CD8-positive, alpha-beta memory T cell (primary cell): ENCODE measurements at regions of chr11 and their contacts with region 1.

Region 1: GRCh38 chr11:75450826-75451821 is 18.1 kb upstream of the KLHL35 start:
- DNase-seq: peak in 1 of 5 donors; percentile 54
- H3K4me3 ChIP-seq: no peak overlapping the region
- H3K4me3 Mint-ChIP-seq: no peak overlapping the region
- H3K27ac ChIP-seq: no peak overlapping the region
- H3K27ac Mint-ChIP-seq: no peak overlapping the region
- H3K4me1 ChIP-seq: no peaks in the 10 kb centered on the region
- H3K4me1 Mint-ChIP-seq: no peaks in the 10 kb centered on the region
- H3K27me3 ChIP-seq: no peaks in the 10 kb centered on the region
- H3K27me3 Mint-ChIP-seq: peaks cover 0 to 2% of the 10 kb centered on the region in 2 donors

Region 2: DNA sequence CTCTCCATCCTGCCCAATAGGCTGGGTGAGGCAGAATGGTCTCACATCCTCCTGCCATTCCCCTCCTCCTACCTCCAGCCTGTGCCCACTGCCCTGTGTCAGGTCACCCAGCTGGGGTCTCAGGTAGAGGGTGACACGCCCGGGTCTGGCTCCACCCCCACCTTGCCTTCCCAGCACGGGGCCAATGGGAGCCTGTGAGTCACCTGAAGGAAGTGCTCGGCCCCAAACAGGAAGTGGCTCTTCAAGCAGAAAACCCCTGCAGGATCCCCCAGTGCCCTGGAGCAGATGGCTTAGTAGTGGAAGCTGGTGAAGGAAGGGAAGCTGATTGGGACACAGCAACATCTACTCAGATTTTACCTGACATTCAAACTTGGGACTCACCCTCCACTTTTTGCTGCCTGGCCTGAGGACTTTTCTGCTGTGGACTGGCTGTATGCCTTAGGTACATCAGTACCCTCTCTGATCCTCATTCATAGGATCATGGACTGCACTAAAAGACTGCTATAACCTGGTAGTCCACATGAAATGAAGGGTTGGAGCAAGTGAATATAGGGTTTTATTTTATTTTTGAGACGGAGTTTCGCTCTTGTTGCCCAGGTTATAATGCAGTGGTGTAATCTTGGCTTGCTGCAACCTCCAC is 41.2 kb after region 1 on chr11:
- CTCF ChIA-PET with region 1: no interaction called
- POLR2A ChIA-PET with region 1: no interaction called
- DNase-seq: peak; percentile 20 to 68 (median 30)
- H3K4me3 ChIP-seq: peak overlapping the region; percentile 27
- H3K4me3 Mint-ChIP-seq: peak overlapping the region in 4 of 7 donors; percentile 44 to 72 (median 54)
- H3K27ac ChIP-seq: no peak overlapping the region
- H3K27ac Mint-ChIP-seq: peak overlapping the region; percentile 15 to 88 (median 69)
- H3K4me1 ChIP-seq: peaks cover 15% of the 10 kb centered on the region
- H3K4me1 Mint-ChIP-seq: peaks cover 11 to 31% (median 19%) of the 10 kb centered on the region in 3 donors
- H3K27me3 ChIP-seq: no peaks in the 10 kb centered on the region
- H3K27me3 Mint-ChIP-seq: no peaks in the 10 kb centered on the region

Region 3: DNA sequence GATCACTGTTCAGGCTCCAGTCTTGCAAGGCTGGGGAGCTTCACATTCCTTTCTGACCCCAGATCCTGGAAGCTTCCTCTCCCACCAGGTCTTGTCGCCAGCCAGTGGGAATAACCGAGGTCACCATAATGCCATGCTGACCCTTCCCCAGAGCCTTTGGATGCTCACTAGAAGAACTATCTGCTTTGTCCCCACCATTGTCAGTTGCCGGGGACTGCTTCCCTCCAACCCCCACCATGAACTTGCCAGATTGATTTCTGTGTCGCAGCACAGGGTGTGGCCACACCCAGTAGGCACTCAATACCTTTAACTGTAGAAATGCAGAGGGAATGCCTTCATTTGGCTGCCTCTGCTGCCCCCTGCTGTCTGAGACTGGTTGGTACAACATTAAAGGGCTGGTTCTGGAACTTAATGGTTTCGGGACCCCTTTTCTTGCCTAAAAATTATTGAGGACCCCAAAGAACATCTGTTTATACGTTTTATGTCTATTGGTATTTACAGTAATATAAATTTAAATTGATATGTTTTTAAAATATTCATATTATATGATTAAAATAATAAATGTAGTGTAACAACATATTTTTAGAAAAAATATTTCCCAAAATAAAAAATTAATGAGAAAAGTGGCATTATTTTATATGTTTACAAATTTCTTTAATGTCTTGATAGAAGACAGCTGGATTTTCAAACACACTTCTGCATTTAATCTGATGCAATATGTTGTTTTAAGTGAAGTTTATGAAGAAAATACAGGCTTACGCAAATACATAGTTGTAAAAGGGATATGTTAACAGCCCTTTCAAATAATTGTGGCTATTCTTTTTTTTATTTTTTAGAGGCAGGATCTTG is 81.3 kb after region 1 on chr11:
- CTCF ChIA-PET with region 1: interaction called, 212 read pairs
- POLR2A ChIA-PET with region 1: no interaction called
- DNase-seq: peak; percentile 71 to 86 (median 75)
- H3K4me3 ChIP-seq: no peak overlapping the region
- H3K4me3 Mint-ChIP-seq: peak overlapping the region in 1 of 7 donors; percentile 25
- H3K27ac ChIP-seq: no peak overlapping the region
- H3K27ac Mint-ChIP-seq: peak overlapping the region in 6 of 8 donors; percentile 3 to 74 (median 38)
- H3K4me1 ChIP-seq: peaks cover 14% of the 10 kb centered on the region
- H3K4me1 Mint-ChIP-seq: peaks cover 22 to 34% (median 32%) of the 10 kb centered on the region in 3 donors
- H3K27me3 ChIP-seq: no peaks in the 10 kb centered on the region
- H3K27me3 Mint-ChIP-seq: peaks cover 0 to 1% of the 10 kb centered on the region in 2 donors

Region 4: DNA sequence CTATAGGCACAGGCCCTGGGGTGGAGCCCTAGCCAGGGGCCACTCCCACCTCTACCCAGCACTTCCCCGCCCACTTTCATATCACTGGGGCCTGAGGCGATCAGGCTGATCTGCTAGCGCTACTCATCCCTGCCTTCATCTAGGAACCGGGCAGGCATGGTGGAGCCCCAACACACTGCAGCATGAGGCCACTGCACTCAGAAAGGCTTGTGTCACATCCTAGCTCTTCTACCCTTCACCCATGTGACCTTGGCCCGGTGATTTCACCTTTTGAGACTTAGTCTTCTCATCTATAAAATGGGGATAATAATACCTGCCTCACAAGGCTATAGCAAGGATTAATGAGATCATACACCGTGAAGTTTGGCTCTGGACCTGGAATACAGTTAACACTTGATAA is 92.7 kb after region 1 on chr11:
- CTCF ChIA-PET with region 1: no interaction called
- POLR2A ChIA-PET with region 1: no interaction called
- DNase-seq: no peak
- H3K4me3 ChIP-seq: no peak overlapping the region
- H3K4me3 Mint-ChIP-seq: no peak overlapping the region
- H3K27ac ChIP-seq: no peak overlapping the region
- H3K27ac Mint-ChIP-seq: no peak overlapping the region
- H3K4me1 ChIP-seq: no peaks in the 10 kb centered on the region
- H3K4me1 Mint-ChIP-seq: no peaks in the 10 kb centered on the region
- H3K27me3 ChIP-seq: no peaks in the 10 kb centered on the region
- H3K27me3 Mint-ChIP-seq: peaks cover 0 to 8% of the 10 kb centered on the region in 2 donors